Activated naive CD4-positive, alpha-beta T cell treated with anti-CD3 and anti-CD28 coated beads for 36 hours (primary cell): ENCODE measurements at regions of chr1 and their contacts with region 1.

Region 1: DNA sequence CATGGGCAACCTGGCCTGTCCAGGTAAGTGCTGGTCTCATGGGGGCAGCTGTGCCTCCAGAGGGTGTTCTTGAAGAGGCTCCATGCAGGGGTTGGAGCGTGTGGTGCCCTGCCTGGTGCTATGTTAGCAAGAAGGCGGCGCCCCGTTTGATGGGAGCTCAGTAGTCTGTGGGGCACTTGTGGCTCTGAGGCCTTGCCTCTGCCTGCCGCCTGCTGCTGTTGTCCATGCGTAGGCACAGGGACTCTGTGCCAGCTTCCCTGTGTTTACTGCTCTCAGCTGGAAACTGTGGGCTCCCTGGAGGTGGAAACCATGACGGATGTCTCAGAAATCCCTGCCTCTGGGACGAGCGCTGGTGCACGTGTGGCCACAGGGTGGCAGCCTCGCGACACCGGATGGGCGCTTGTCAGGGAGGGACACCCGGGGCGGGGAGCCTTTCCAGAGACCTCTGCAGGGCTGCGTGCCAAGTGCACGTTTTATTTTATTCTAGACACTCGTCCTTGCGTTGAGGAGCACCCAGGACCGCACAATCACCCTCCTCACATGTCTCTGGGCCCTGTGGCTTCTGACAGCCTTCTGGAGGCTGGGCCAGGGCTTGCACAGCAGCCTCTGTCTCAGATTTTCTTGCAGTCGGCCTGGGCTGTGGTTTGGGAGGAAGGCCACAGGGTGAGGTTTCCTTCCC is 27.1 kb downstream of the SNAP47 start:
- DNase-seq: peak; percentile 91
- H3K4me3 Mint-ChIP-seq: no peak overlapping the region
- H3K27ac Mint-ChIP-seq: no peak overlapping the region
- H3K4me1 Mint-ChIP-seq: peaks cover 86% of the 10 kb centered on the region
- H3K27me3 Mint-ChIP-seq: no peaks in the 10 kb centered on the region

Region 2: DNA sequence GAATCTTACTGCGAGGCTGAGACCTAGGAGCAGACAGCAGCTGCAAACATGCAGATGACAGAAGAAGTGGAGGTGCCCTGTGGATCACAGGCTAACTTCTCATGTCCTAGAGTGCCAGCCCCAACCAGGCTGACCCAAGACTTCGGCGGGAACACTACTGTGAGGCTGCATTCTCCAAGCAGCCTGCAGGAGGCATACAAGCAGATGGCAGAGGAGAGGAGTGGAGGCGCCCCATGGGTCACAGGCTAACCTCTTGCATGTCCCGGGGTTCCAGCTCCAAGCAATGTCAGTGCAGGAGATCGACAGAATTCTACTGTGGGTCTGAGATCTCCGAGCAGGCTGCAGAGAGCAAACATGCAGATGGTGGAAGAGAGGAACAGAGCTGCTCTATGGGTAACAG is 297.1 kb before region 1 on chr1:
- CTCF ChIA-PET with region 1: no interaction called
- intact Hi-C with region 1: no loop called
- DNase-seq: no peak
- H3K4me3 Mint-ChIP-seq: no peak overlapping the region
- H3K27ac Mint-ChIP-seq: no peak overlapping the region
- H3K4me1 Mint-ChIP-seq: no peaks in the 10 kb centered on the region
- H3K27me3 Mint-ChIP-seq: peaks cover 3% of the 10 kb centered on the region

Region 3: GRCh38 chr1:227486559-227486958 is 275.8 kb before region 1 on chr1:
- CTCF ChIA-PET with region 1: no interaction called
- intact Hi-C with region 1: loop called (anchors 1 kb)
- DNase-seq: no peak
- H3K4me3 Mint-ChIP-seq: no peak overlapping the region
- H3K27ac Mint-ChIP-seq: no peak overlapping the region
- H3K4me1 Mint-ChIP-seq: no peaks in the 10 kb centered on the region
- H3K27me3 Mint-ChIP-seq: no peaks in the 10 kb centered on the region

Region 4: GRCh38 chr1:227728059-227728891 is 34.1 kb before region 1 on chr1:
- CTCF ChIA-PET with region 1: interaction called, 3 read pairs
- intact Hi-C with region 1: loop called (anchors 1 kb)
- DNase-seq: peak; percentile 82
- H3K4me3 Mint-ChIP-seq: peak overlapping the region; percentile 82
- H3K27ac Mint-ChIP-seq: peak overlapping the region; percentile 65
- H3K4me1 Mint-ChIP-seq: peaks cover 22% of the 10 kb centered on the region
- H3K27me3 Mint-ChIP-seq: peaks cover 4% of the 10 kb centered on the region

Region 5: GRCh38 chr1:227787513-227788270 is 25.3 kb after region 1 on chr1:
- CTCF ChIA-PET with region 1: no interaction called
- intact Hi-C with region 1: loop called (anchors 1 kb)
- DNase-seq: peak; percentile 95
- H3K4me3 Mint-ChIP-seq: peak overlapping the region; percentile 73
- H3K27ac Mint-ChIP-seq: no peak overlapping the region
- H3K4me1 Mint-ChIP-seq: peaks cover 19% of the 10 kb centered on the region
- H3K27me3 Mint-ChIP-seq: peaks cover 2% of the 10 kb centered on the region

Region 6: GRCh38 chr1:227934476-227935313 is 172.3 kb after region 1 on chr1:
- CTCF ChIA-PET with region 1: interaction called, 3 read pairs
- intact Hi-C with region 1: loop called (anchors 2 kb)
- DNase-seq: peak; percentile 70
- H3K4me3 Mint-ChIP-seq: no peak overlapping the region
- H3K27ac Mint-ChIP-seq: peak overlapping the region; percentile 73
- H3K4me1 Mint-ChIP-seq: peaks cover 20% of the 10 kb centered on the region
- H3K27me3 Mint-ChIP-seq: no peaks in the 10 kb centered on the region

Region 7: GRCh38 chr1:227952374-227953021 is 190.1 kb after region 1 on chr1:
- CTCF ChIA-PET with region 1: interaction called, 21 read pairs
- intact Hi-C with region 1: loop called (anchors 1 kb)
- DNase-seq: no peak
- H3K4me3 Mint-ChIP-seq: no peak overlapping the region
- H3K27ac Mint-ChIP-seq: no peak overlapping the region
- H3K4me1 Mint-ChIP-seq: peaks cover 3% of the 10 kb centered on the region
- H3K27me3 Mint-ChIP-seq: peaks cover 31% of the 10 kb centered on the region

Region 8: DNA sequence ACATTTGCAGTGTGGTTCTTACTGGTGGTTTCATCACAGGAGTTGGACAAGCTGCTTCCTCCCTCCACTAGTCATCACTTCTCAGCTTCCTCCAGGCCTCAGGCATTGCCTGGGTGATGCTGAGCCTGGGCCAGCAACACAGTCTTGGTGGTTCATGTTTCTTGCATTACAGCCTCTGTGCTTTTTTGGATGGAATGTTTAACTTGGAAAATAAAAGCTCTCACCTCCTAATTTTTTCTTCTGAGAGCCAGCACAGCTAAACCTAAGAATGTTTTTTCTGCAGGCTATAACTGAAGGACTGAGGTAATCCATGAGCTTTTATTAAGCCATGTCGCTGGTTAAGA is 906.8 kb after region 1 on chr1:
- CTCF ChIA-PET with region 1: no interaction called
- intact Hi-C with region 1: no loop called
- DNase-seq: no peak
- H3K4me3 Mint-ChIP-seq: no peak overlapping the region
- H3K27ac Mint-ChIP-seq: no peak overlapping the region
- H3K4me1 Mint-ChIP-seq: no peaks in the 10 kb centered on the region
- H3K27me3 Mint-ChIP-seq: no peaks in the 10 kb centered on the region